Activated B cell treated with CpG ODN at 0.5 μM for 24 hours (primary cell): ENCODE measurements at regions of chr3 and their contacts with region 1.

Region 1: GRCh38 chr3:15557511-15557946 is 36.0 kb upstream of the COLQ start:
- DNase-seq: peak; percentile 19
- ATAC-seq: peak; percentile 81
- H3K4me3 Mint-ChIP-seq: no peak overlapping the region
- H3K27ac Mint-ChIP-seq: no peak overlapping the region
- H3K4me1 Mint-ChIP-seq: peaks cover 29% of the 10 kb centered on the region
- H3K27me3 Mint-ChIP-seq: no peaks in the 10 kb centered on the region
- CTCF ChIP-seq: no peak

Region 2: DNA sequence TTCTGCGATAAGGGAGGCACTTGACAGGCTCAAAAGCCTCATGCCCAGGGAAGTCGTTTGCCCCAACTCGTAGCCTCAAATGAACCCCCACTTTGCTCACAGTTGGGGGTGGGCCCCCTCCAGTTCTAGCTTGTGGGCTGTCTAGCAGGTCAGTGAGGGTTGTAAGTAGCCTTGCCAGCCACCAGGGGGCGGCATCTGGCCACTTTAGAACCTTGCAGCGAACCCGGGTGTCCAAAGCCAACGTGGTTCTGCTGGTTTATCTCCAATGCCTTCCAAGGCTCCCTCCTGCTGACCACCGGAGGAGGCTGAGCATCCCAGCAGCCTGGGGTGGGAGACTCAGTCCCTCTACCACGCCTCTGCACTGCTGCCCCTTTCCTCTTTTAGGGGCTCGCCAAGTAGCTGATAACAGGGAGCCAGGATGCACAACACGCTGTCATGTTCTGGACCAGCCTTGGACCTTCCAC is 449.4 kb before region 1 on chr3:
- CTCF ChIA-PET with region 1: interaction called, 3 read pairs
- POLR2A ChIA-PET with region 1: no interaction called
- intact Hi-C with region 1: loop called (anchors 1 kb)
- DNase-seq: peak; percentile 66
- ATAC-seq: peak; percentile 98
- H3K4me3 Mint-ChIP-seq: no peak overlapping the region
- H3K27ac Mint-ChIP-seq: no peak overlapping the region
- H3K4me1 Mint-ChIP-seq: peaks cover 2% of the 10 kb centered on the region
- H3K27me3 Mint-ChIP-seq: peaks cover 7% of the 10 kb centered on the region
- CTCF ChIP-seq: peak; percentile 69

Region 3: DNA sequence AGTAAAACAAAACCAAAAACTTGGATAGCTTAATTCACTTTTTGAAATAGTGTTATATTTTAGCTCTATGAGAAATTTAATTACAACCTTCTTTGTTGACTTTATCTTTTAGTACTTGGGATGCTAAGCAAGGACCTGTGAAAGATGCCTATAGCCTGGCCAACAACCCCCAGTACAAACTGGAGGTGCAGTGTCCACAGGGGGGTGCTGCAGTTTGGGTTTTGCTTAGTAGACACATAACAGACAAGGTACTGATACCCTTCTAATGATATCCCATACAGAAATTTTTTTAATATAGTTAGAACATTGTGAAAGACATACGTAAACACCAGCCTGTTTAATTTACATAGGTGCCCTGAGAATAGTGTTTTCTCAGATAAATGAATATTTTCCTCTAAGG is 316.2 kb before region 1 on chr3:
- CTCF ChIA-PET with region 1: no interaction called
- POLR2A ChIA-PET with region 1: no interaction called
- intact Hi-C with region 1: loop called (anchors 1 kb)
- DNase-seq: no peak
- ATAC-seq: peak; percentile 65
- H3K4me3 Mint-ChIP-seq: no peak overlapping the region
- H3K27ac Mint-ChIP-seq: no peak overlapping the region
- H3K4me1 Mint-ChIP-seq: no peaks in the 10 kb centered on the region
- H3K27me3 Mint-ChIP-seq: no peaks in the 10 kb centered on the region
- CTCF ChIP-seq: no peak

Region 4: DNA sequence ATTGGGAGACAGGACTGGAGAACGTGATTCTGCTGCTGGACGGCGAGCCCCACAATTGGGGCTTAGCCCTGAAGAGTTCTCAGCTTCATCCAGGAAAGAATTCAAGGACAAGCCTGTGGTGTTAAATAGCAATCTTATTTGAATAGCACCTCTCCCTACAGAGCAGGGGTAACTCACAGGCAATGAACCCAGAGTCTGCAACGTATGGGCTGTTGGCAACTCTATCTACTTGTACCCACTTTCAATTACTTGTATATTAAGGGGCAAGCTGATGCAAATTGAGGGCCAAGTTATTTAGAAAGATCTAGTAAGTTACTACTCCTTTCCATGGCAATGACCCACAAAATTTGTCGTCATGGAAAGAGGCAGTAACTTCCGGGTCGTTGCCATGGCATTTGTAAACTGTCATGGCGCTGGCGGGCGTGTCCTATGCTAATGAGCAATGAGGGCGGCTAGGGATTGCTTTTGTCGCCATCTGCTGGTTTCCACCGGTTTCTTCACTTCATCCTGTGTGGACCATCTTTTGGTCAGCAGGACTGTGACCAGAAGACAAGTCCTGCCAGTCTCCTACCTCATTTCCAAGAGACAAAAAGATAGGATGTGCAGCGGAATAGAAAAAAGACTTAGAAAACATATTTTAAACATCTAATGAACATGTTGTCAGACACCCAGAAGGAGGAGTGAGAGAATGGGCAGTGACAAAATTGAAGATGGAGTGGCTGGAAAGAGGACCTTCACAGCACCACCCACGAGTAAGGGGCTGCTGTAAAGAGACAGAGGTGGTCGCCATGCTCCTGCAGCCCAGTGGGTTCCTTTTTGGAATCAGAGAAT is 179.4 kb before region 1 on chr3:
- CTCF ChIA-PET with region 1: no interaction called
- POLR2A ChIA-PET with region 1: no interaction called
- intact Hi-C with region 1: loop called (anchors 1 kb)
- DNase-seq: peak; percentile 88
- ATAC-seq: peak; percentile 94
- H3K4me3 Mint-ChIP-seq: peak overlapping the region; percentile 44
- H3K27ac Mint-ChIP-seq: peak overlapping the region; percentile 91
- H3K4me1 Mint-ChIP-seq: peaks cover 29% of the 10 kb centered on the region
- H3K27me3 Mint-ChIP-seq: no peaks in the 10 kb centered on the region
- CTCF ChIP-seq: no peak

Region 5: GRCh38 chr3:15427182-15427880 is 130.2 kb before region 1 on chr3 and contains the starts of genes EAF1 and METTL6:
- CTCF ChIA-PET with region 1: no interaction called
- POLR2A ChIA-PET with region 1: no interaction called
- intact Hi-C with region 1: loop called (anchors 1 kb)
- DNase-seq: peak; percentile 76
- ATAC-seq: peak; percentile 92
- H3K4me3 Mint-ChIP-seq: peak within 1 kb of the TSS; percentile 96
- H3K27ac Mint-ChIP-seq: peak within 1 kb of the TSS; percentile 95
- H3K4me1 Mint-ChIP-seq: peaks cover 50% of the 10 kb centered on the region
- H3K27me3 Mint-ChIP-seq: no peaks in the 10 kb centered on the region
- CTCF ChIP-seq: no peak
- total RNA-seq, gene EAF1: 19.2 and 19.7 TPM in 2 replicates
- total RNA-seq, gene METTL6: 18.7 and 20.2 TPM in 2 replicates